Sigmoid colon (tissue), 7 donors: ENCODE measurements at regions of chr3 and their contacts with region 1.

Region 1: GRCh38 chr3:125055913-125056745 is at the start of gene HEG1:
- DNase-seq: peak; percentile 95
- H3K4me3 ChIP-seq: peak within 1 kb of the TSS; percentile 64 to 81 (median 79)
- H3K27ac ChIP-seq: peak within 1 kb of the TSS; percentile 93 to 95 (median 94)
- H3K4me1 ChIP-seq: peaks cover 0 to 71% (median 64%) of the 10 kb centered on the region in 4 donors
- H3K27me3 ChIP-seq: no peaks in the 10 kb centered on the region
- CTCF ChIP-seq: no peak
- EP300 ChIP-seq: no peak
- POLR2A ChIP-seq: peak in 1 of 2 donors; percentile 30
- total RNA-seq, gene HEG1: 24.5 to 61.6 (median 41.5) TPM

Region 2: GRCh38 chr3:124786441-124787241 is 269.5 kb before region 1 on chr3:
- intact Hi-C with region 1: loop called (anchors 10 kb)
- DNase-seq: no peak
- H3K4me3 ChIP-seq: no peak overlapping the region
- H3K27ac ChIP-seq: peak overlapping the region; percentile 57 to 82 (median 66)
- H3K4me1 ChIP-seq: peaks cover 0 to 50% (median 44%) of the 10 kb centered on the region in 4 donors
- H3K27me3 ChIP-seq: no peaks in the 10 kb centered on the region
- CTCF ChIP-seq: peak in 3 of 4 experiments; percentile 34 to 48 (median 39)
- EP300 ChIP-seq: no peak
- POLR2A ChIP-seq: no peak

Region 3: DNA sequence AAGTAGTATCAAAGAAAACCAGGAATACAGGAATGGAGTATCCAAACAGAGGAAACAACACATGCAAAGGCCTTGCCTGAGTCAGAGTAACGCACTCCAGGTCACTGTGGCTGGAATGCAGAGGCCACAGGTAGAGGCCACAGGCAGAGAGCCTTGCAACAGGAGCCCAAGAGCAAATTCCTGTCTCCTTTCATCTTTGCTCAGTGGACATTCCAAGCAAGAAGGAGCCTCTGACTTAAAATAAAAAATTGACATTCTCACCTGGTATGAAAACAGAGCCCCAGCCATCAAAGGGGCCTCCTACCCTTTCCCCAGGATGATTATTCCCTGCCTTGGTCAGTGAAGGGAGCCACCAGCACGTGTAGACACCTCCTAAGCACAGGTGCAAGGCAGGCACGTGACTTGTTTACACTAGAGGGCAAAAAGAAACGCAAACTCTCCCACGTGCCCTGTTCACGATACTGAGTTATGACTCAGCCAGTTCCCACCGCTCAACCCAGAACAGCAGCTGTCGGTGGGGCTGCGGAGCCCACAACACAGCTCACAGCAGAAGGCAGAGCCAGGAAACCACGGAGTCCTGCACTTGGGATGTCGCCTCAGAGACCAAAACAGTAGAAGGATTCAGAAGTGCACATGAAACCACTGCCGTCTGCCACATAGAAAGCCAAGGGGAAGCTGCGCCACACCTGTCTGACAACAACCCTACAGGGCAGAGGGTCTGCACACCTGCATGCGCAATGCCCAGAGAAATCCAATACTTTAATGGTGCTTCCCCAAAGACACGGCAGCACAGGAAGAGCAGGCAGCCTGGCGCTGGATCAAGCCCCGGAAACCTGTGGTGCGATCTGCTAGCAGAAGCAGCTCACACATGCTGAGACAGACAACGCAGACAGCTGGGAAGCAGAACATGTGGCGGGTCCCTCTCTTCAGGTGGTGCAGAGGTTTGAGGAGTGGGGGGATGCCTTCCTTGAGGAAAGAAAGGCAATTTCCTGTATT is 221.1 kb before region 1 on chr3:
- intact Hi-C with region 1: no loop called
- DNase-seq: peak; percentile 78
- H3K4me3 ChIP-seq: peak overlapping the region in 1 of 4 donors; percentile 22
- H3K27ac ChIP-seq: peak overlapping the region; percentile 70 to 89 (median 76)
- H3K4me1 ChIP-seq: peaks cover 0 to 74% (median 56%) of the 10 kb centered on the region in 4 donors
- H3K27me3 ChIP-seq: no peaks in the 10 kb centered on the region
- CTCF ChIP-seq: no peak
- EP300 ChIP-seq: peak in 1 of 4 donors; percentile 35
- POLR2A ChIP-seq: no peak

Region 4: GRCh38 chr3:125003369-125003853 is 52.7 kb before region 1 on chr3:
- intact Hi-C with region 1: loop called (anchors 2 kb)
- DNase-seq: peak; percentile 91
- H3K4me3 ChIP-seq: no peak overlapping the region
- H3K27ac ChIP-seq: peak overlapping the region; percentile 69 to 84 (median 77)
- H3K4me1 ChIP-seq: peaks cover 0 to 80% (median 74%) of the 10 kb centered on the region in 4 donors
- H3K27me3 ChIP-seq: no peaks in the 10 kb centered on the region
- CTCF ChIP-seq: no peak
- EP300 ChIP-seq: peak in 3 of 4 donors; percentile 33 to 50 (median 43)
- POLR2A ChIP-seq: no peak

Region 5: GRCh38 chr3:125141596-125142419 is 85.7 kb after region 1 on chr3:
- intact Hi-C with region 1: loop called (anchors 5 kb)
- DNase-seq: peak; percentile 84
- H3K4me3 ChIP-seq: peak overlapping the region; percentile 28 to 54 (median 43)
- H3K27ac ChIP-seq: peak overlapping the region; percentile 46 to 65 (median 58)
- H3K4me1 ChIP-seq: peaks cover 0 to 33% (median 21%) of the 10 kb centered on the region in 4 donors
- H3K27me3 ChIP-seq: no peaks in the 10 kb centered on the region
- CTCF ChIP-seq: peak in 2 of 4 experiments; percentile 52
- EP300 ChIP-seq: no peak
- POLR2A ChIP-seq: no peak

Region 6: GRCh38 chr3:125418306-125418705 is 362.2 kb after region 1 on chr3:
- intact Hi-C with region 1: no loop called
- DNase-seq: no peak
- H3K4me3 ChIP-seq: no peak overlapping the region
- H3K27ac ChIP-seq: no peak overlapping the region
- H3K4me1 ChIP-seq: no peaks in the 10 kb centered on the region
- H3K27me3 ChIP-seq: no peaks in the 10 kb centered on the region
- CTCF ChIP-seq: no peak
- EP300 ChIP-seq: no peak
- POLR2A ChIP-seq: no peak

Region 7: DNA sequence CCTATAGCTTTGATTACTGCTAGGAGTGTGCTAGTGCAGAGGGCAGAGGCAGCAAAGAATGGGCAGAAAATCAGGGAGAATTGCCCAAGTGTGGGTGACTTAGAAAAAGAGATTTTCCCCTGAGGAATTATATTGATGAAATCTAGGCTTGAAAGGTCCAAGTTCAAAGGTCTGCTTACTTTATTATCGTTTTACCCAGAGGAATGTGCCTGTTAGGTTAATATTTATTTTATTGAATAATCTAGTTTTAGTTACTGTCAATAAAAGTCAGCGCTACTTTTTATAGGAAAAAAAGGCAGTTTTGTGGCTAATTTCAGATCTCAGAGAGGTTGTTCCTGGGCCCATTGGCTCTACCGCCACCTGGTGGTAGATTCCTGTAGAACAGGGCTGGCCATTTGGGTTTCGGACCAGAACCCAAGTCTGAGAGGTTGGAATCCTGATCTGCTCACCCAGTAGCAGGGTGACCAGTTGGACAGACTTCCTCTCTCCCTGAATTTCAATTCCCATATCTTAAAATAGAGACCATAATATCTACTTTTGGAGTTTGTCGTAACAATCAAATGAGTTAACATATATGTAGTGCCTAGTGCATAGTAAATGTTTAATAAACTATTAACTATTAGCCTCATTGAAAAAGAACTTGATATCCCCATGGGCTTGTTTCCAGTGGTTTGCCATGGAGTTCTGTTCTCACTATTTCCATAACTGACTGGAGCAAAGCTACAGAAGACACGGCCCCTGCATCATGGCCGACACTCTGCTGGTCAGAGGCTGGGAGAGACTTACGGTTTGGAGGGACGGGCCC is 381.7 kb after region 1 on chr3:
- intact Hi-C with region 1: loop called (anchors 5 kb)
- DNase-seq: peak; percentile 71
- H3K4me3 ChIP-seq: no peak overlapping the region
- H3K27ac ChIP-seq: no peak overlapping the region
- H3K4me1 ChIP-seq: no peaks in the 10 kb centered on the region
- H3K27me3 ChIP-seq: no peaks in the 10 kb centered on the region
- CTCF ChIP-seq: peak; percentile 60 to 95 (median 89)
- EP300 ChIP-seq: no peak
- POLR2A ChIP-seq: no peak

Region 8: DNA sequence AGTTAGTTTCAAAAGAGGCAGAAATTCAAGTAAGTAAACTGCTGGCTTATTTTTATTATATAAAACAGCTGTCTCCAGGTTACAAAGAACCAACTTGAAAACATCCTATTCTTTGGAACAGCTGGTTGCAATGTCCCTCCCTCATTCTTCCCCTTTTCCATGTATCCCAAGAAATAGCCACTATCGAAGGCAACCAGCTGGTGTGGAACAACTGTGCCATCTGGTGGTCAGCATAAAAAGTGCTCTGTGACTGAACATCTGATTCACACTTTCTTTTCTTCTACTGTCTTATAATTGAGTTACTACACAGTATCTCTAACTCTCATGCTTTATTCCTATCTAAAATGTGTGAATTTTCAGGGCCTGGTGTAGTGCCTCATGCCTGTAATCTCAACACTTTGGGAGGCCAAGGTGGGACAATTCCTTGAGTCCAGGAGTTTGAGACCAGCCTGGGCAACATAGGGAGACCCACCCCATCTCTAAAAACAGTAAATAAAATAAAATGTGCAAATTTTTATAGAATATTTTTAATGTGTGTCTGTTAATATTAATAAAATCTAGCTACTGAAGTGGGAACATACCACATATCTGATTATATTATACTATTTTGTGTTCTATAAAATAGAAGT is 529.6 kb after region 1 on chr3:
- intact Hi-C with region 1: loop called (anchors 10 kb)
- DNase-seq: peak; percentile 79
- H3K4me3 ChIP-seq: no peak overlapping the region
- H3K27ac ChIP-seq: peak overlapping the region in 1 of 4 donors; percentile 14
- H3K4me1 ChIP-seq: peaks cover 0 to 41% (median 18%) of the 10 kb centered on the region in 4 donors
- H3K27me3 ChIP-seq: no peaks in the 10 kb centered on the region
- CTCF ChIP-seq: peak; percentile 57 to 85 (median 82)
- EP300 ChIP-seq: no peak
- POLR2A ChIP-seq: no peak